ENCODE measurements at regions of chr15 and their contacts with region 1.

Region 1: GRCh38 chr15:101188637-101189408 is 63.0 kb downstream of the CHSY1 start:
- DNase-seq: no peak
- H3K4me3 Mint-ChIP-seq: peak overlapping the region; percentile 54
- H3K27ac Mint-ChIP-seq: peak overlapping the region; percentile 90
- H3K4me1 Mint-ChIP-seq: peaks cover 81% of the 10 kb centered on the region
- H3K27me3 Mint-ChIP-seq: no peaks in the 10 kb centered on the region

Region 2: GRCh38 chr15:101161656-101162055 is 27.2 kb before region 1 on chr15:
- CTCF ChIA-PET with region 1: no interaction called
- POLR2A ChIA-PET with region 1: no interaction called
- intact Hi-C with region 1: loop called (anchors 1 kb)
- DNase-seq: peak; percentile 73
- H3K4me3 Mint-ChIP-seq: peak overlapping the region; percentile 4
- H3K27ac Mint-ChIP-seq: peak overlapping the region; percentile 75
- H3K4me1 Mint-ChIP-seq: peaks cover 33% of the 10 kb centered on the region
- H3K27me3 Mint-ChIP-seq: no peaks in the 10 kb centered on the region

Region 3: DNA sequence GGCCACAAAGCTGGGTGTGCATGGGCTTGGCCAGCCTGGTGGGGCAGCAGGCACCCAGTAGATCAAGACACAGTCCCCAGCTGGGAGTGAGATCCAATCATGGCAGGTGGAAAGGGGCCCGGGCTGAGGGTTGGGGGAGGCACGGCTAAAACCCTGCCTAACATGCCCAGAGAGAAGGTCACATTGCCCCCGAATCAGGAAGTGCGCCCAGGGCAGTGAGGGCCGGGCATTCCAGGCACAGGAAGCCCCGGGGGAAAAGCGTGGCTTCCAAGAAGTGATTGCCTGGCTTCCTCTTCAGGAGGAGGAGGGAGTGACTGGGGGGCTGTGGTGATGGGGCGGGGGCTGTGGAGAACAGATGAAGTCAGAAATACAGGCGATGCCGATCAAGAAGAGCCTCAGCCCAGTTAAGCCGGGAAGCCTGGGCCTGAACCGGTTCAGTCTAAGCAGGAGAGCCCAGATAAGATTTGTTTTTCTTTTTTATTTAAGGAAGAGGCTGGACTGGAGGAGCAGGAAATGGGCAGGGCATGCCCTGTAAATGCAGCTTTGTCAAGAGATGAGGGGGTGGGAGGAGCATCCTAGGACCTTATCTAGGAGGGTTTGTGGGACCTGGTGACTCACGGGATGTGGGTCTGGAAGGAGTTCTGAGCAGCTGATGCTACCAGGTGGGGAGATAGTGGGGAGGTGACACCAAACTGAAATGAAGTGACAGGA is 20.9 kb before region 1 on chr15:
- CTCF ChIA-PET with region 1: no interaction called
- POLR2A ChIA-PET with region 1: no interaction called
- intact Hi-C with region 1: loop called (anchors 1 kb)
- DNase-seq: peak; percentile 88
- H3K4me3 Mint-ChIP-seq: peak overlapping the region; percentile 44
- H3K27ac Mint-ChIP-seq: peak overlapping the region; percentile 87
- H3K4me1 Mint-ChIP-seq: peaks cover 21% of the 10 kb centered on the region
- H3K27me3 Mint-ChIP-seq: no peaks in the 10 kb centered on the region

Region 4: GRCh38 chr15:101221902-101222301 is 33.1 kb after region 1 on chr15:
- CTCF ChIA-PET with region 1: no interaction called
- POLR2A ChIA-PET with region 1: no interaction called
- intact Hi-C with region 1: no loop called
- DNase-seq: no peak
- H3K4me3 Mint-ChIP-seq: no peak overlapping the region
- H3K27ac Mint-ChIP-seq: no peak overlapping the region
- H3K4me1 Mint-ChIP-seq: peaks cover 47% of the 10 kb centered on the region
- H3K27me3 Mint-ChIP-seq: no peaks in the 10 kb centered on the region

Region 5: GRCh38 chr15:101852356-101852755 is 663.5 kb after region 1 on chr15:
- CTCF ChIA-PET with region 1: no interaction called
- POLR2A ChIA-PET with region 1: no interaction called
- intact Hi-C with region 1: no loop called
- DNase-seq: no peak
- H3K4me3 Mint-ChIP-seq: no peak overlapping the region
- H3K27ac Mint-ChIP-seq: no peak overlapping the region
- H3K4me1 Mint-ChIP-seq: no peaks in the 10 kb centered on the region
- H3K27me3 Mint-ChIP-seq: peaks cover 12% of the 10 kb centered on the region